Gastrocnemius medialis (tissue), 4 donors: ENCODE measurements at regions of chr9 and their contacts with region 1.

Region 1: DNA sequence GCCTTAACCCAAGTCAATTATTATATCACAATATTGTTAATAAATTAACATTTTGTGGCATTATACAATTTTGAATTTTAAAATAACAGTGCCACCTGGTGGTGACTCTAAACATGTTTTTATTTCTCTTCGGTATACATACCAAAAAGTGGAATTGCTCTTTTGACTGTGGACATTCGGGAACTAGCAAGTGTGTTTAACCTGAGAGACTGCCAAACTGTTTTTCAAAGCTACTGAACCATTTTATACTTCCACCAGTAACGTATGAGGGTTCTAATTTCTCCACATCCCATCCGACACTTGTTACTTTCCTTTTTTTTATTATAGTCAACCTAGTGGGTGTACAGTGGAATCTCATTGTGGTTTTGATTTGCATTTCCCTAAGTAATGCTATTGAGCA is 18.3 kb upstream of the HSDL2 start:
- DNase-seq: no peak
- ATAC-seq: peak in 1 of 2 donors; percentile 26
- H3K4me3 ChIP-seq: no peak overlapping the region
- H3K27ac ChIP-seq: no peak overlapping the region
- H3K4me1 ChIP-seq: no peaks in the 10 kb centered on the region
- H3K27me3 ChIP-seq: no peaks in the 10 kb centered on the region
- CTCF ChIP-seq: peak; percentile 48 to 65 (median 59)
- POLR2A ChIP-seq: no peak

Region 2: DNA sequence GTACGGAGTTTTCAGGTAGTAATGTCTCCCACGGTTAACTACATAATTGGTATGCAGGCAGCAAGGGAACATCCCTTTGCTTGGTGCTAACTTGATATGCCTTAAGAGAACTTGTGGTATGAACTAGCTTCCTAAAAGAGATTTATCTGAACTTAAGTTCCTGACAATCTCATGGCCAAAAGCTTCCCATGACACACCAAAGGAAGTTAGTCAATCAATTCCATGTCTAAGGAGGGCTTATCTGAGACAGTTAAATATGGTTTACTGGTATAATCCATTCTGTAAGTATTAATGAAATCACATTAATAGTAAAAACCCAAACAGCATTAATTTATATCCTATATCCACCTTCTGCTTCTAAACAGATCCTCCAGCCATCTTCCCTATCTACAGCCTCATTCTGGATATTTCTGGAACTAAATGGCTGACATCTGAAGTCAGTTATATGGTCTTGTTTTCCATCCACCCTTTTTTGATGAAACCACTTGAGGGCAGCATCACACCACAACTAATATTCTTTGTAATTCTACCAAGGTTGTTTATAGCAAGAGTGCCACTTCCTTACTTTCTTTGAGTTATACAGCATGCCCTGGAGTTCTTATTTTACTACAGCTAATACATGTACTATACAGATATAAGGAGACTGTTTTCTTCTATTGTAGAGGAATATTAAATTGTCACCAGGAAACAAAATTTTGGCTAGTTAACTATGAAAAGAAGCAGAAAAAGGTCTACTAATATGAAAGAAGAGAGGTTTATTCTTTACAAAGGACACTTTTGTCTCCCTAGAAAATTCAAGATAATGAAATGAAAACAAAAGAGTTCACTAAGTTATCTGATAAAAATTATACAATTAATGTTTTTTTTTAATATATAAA is 601.6 kb before region 1 on chr9:
- in situ Hi-C with region 1: loop called in 3 of 4 experiments (anchors 25 kb)
- intact Hi-C with region 1: loop called (anchors 5 kb)
- DNase-seq: no peak
- ATAC-seq: peak; percentile 89 to 90
- H3K4me3 ChIP-seq: no peak overlapping the region
- H3K27ac ChIP-seq: no peak overlapping the region
- H3K4me1 ChIP-seq: peaks cover 0 to 4% of the 10 kb centered on the region in 2 donors
- H3K27me3 ChIP-seq: no peaks in the 10 kb centered on the region
- CTCF ChIP-seq: peak; percentile 31 to 75 (median 59)
- POLR2A ChIP-seq: no peak

Region 3: DNA sequence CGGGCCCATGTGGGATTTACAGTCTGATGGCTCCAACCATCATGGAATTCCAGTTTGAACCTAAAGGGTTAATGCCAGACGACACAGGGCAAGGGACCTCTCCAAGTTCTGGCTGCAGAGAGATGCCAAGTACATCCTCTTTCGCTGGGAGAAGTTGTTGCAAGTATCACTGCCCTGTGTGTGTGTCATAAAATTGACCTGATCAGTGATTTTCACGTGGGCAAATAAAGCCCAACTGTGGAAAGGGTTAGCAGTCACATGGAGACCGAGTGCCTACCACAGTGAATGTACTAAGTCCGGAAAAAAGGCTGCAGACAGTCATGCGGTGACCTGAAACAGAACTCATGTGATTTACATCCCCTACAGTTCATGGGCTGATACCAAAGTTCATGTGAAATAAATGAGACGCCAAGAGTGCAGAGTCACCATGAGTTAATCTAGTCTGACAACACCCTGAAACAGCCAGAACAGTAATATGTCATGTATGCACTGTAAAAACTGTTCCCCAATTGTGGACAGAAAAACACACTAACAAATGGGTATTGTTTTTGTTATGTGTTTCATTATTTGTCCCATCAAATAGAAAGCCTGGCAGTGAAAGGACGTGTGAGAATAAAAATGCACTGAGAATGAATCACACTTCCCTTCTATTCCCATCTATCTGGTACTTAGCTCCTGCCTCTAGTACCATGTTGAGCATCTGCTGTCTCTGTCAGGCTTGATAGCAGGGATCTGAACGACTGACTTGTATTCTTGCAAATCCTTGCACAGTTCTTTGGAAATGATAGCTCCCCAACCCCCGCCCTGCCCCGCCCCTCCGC is 302.2 kb before region 1 on chr9:
- in situ Hi-C with region 1: no loop called
- intact Hi-C with region 1: no loop called
- DNase-seq: no peak
- ATAC-seq: no peak
- H3K4me3 ChIP-seq: no peak overlapping the region
- H3K27ac ChIP-seq: peak overlapping the region; percentile 43 to 72 (median 64)
- H3K4me1 ChIP-seq: peaks cover 7 to 15% of the 10 kb centered on the region in 2 donors
- H3K27me3 ChIP-seq: no peaks in the 10 kb centered on the region
- CTCF ChIP-seq: no peak
- POLR2A ChIP-seq: no peak

Region 4: DNA sequence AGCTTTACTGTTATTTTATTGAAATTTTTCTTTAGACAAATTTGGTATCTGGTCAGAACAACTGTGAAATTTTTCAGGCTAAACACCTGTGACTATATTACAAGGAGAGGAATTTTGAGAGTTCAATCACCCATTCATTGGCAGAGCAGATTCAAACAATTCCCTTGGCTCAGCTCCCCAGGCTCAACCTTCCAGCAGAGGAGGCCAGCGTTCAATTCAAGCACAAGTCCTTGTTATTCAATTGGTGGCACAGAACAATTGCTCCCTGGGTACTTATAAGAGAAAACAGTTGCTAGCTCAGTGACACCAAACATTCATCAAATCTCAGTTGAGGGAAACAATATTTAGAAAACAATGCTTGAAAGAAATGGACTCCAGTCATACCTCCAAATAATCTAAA is 269.8 kb before region 1 on chr9:
- in situ Hi-C with region 1: loop called (anchors 5 to 10 kb)
- intact Hi-C with region 1: no loop called
- DNase-seq: no peak
- ATAC-seq: no peak
- H3K4me3 ChIP-seq: no peak overlapping the region
- H3K27ac ChIP-seq: no peak overlapping the region
- H3K4me1 ChIP-seq: peaks cover 0 to 5% of the 10 kb centered on the region in 2 donors
- H3K27me3 ChIP-seq: no peaks in the 10 kb centered on the region
- CTCF ChIP-seq: no peak
- POLR2A ChIP-seq: no peak

Region 5: GRCh38 chr9:112166172-112167140 is 195.1 kb before region 1 on chr9:
- in situ Hi-C with region 1: no loop called
- intact Hi-C with region 1: loop called (anchors 5 kb)
- DNase-seq: peak; percentile 23 to 67
- ATAC-seq: peak; percentile 84 to 85
- H3K4me3 ChIP-seq: no peak overlapping the region
- H3K27ac ChIP-seq: peak overlapping the region in 2 of 4 donors; percentile 14 to 47
- H3K4me1 ChIP-seq: no peaks in the 10 kb centered on the region
- H3K27me3 ChIP-seq: no peaks in the 10 kb centered on the region
- CTCF ChIP-seq: no peak
- POLR2A ChIP-seq: no peak

Region 6: DNA sequence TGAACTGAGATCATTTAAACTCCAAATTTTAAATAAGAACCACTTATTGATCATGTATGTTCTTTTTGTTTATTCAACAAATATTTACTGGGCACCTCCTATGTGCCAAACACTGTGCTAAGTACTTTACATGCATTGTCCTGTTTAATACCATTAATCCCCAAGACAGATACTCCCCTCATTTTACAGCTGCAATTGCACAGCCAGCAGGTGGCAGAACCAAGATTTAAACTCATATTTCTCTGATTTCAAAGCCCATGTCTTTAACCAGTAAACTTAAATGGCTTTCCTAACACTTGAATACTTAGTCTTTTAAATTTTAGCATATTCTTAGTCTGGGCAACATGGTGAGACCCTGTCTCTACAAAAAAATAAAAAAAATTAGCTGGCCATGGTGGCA is 81.6 kb after region 1 on chr9:
- in situ Hi-C with region 1: no loop called
- intact Hi-C with region 1: no loop called
- DNase-seq: no peak
- ATAC-seq: no peak
- H3K4me3 ChIP-seq: no peak overlapping the region
- H3K27ac ChIP-seq: no peak overlapping the region
- H3K4me1 ChIP-seq: peaks cover 8 to 12% of the 10 kb centered on the region in 2 donors
- H3K27me3 ChIP-seq: no peaks in the 10 kb centered on the region
- CTCF ChIP-seq: peak in 1 of 5 experiments; percentile 29
- POLR2A ChIP-seq: no peak

Region 7: GRCh38 chr9:112558476-112558875 is 196.9 kb after region 1 on chr9:
- in situ Hi-C with region 1: no loop called
- intact Hi-C with region 1: no loop called
- DNase-seq: no peak
- ATAC-seq: no peak
- H3K4me3 ChIP-seq: no peak overlapping the region
- H3K27ac ChIP-seq: no peak overlapping the region
- H3K4me1 ChIP-seq: no peaks in the 10 kb centered on the region
- H3K27me3 ChIP-seq: no peaks in the 10 kb centered on the region
- CTCF ChIP-seq: no peak
- POLR2A ChIP-seq: no peak

Region 8: GRCh38 chr9:112809351-112809848 is 447.8 kb after region 1 on chr9:
- in situ Hi-C with region 1: no loop called
- intact Hi-C with region 1: no loop called
- DNase-seq: no peak
- ATAC-seq: no peak
- H3K4me3 ChIP-seq: no peak overlapping the region
- H3K27ac ChIP-seq: no peak overlapping the region
- H3K4me1 ChIP-seq: no peaks in the 10 kb centered on the region
- H3K27me3 ChIP-seq: no peaks in the 10 kb centered on the region
- CTCF ChIP-seq: no peak
- POLR2A ChIP-seq: no peak